GM10248 (cell line): ENCODE measurements at regions of chr16 and their contacts with region 1.

Region 1: GRCh38 chr16:81440888-81441761 is 3.5 kb upstream of the CMIP start:
- DNase-seq: no peak
- CTCF ChIP-seq: no peak

Region 2: GRCh38 chr16:81429045-81429521 is 12.0 kb before region 1 on chr16:
- CTCF ChIA-PET with region 1: interaction called, 10 read pairs
- POLR2A ChIA-PET with region 1: interaction called, 3 read pairs
- DNase-seq: no peak
- CTCF ChIP-seq: peak; percentile 25